Mammary epithelial cell (primary cell): ENCODE measurements at regions of chr1 and their contacts with region 1.

Region 1: GRCh38 chr1:84433258-84434080 is 35.2 kb downstream of the DNASE2B start:
- DNase-seq: peak; percentile 61
- H3K4me3 ChIP-seq: no peak overlapping the region
- H3K27ac ChIP-seq: peak overlapping the region; percentile 33
- H3K4me1 ChIP-seq: peaks cover 16% of the 10 kb centered on the region
- H3K27me3 ChIP-seq: no peaks in the 10 kb centered on the region
- CTCF ChIP-seq: peak; percentile 66 to 73

Region 2: GRCh38 chr1:83905315-83905907 is 528.1 kb before region 1 on chr1:
- CTCF ChIA-PET with region 1: no interaction called
- dilution Hi-C with region 1: no loop called
- in situ Hi-C with region 1: no loop called
- intact Hi-C with region 1: loop called (anchors 2 kb)
- DNase-seq: no peak
- H3K4me3 ChIP-seq: no peak overlapping the region
- H3K27ac ChIP-seq: no peak overlapping the region
- H3K4me1 ChIP-seq: peaks cover 20% of the 10 kb centered on the region
- H3K27me3 ChIP-seq: no peaks in the 10 kb centered on the region
- CTCF ChIP-seq: peak; percentile 42 to 61

Region 3: DNA sequence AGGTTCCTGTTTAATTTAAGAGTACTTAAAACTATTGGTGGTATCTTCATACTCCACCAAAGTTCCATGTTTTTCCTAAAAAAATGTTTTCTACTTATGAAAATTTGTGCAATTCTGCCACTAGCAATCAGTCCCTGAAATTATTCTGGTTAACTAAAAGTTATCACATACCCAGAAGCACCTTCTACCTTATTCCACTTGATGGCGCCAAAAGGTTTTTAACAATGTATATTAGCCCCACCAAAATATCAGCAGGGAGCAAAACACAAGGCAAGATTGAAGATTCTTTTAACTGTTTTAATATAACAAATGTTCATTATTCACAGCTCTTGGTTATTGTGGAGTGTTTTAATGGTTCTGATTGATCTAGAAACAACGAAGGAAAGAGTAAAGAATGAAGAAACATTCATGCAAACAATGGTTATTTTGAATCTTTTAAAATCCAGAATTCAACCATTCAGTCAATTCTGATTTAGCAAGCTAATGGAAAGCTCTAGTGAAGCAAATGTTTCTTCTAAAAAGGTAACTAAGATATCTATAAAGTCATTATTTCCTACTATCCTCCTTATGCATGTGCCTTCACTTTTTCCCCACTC is 501.7 kb before region 1 on chr1:
- CTCF ChIA-PET with region 1: no interaction called
- dilution Hi-C with region 1: no loop called
- in situ Hi-C with region 1: loop called (anchors 10 to 25 kb)
- intact Hi-C with region 1: loop called (anchors 1 kb)
- DNase-seq: peak; percentile 16
- H3K4me3 ChIP-seq: no peak overlapping the region
- H3K27ac ChIP-seq: no peak overlapping the region
- H3K4me1 ChIP-seq: no peaks in the 10 kb centered on the region
- H3K27me3 ChIP-seq: no peaks in the 10 kb centered on the region
- CTCF ChIP-seq: peak; percentile 67 to 75

Region 4: DNA sequence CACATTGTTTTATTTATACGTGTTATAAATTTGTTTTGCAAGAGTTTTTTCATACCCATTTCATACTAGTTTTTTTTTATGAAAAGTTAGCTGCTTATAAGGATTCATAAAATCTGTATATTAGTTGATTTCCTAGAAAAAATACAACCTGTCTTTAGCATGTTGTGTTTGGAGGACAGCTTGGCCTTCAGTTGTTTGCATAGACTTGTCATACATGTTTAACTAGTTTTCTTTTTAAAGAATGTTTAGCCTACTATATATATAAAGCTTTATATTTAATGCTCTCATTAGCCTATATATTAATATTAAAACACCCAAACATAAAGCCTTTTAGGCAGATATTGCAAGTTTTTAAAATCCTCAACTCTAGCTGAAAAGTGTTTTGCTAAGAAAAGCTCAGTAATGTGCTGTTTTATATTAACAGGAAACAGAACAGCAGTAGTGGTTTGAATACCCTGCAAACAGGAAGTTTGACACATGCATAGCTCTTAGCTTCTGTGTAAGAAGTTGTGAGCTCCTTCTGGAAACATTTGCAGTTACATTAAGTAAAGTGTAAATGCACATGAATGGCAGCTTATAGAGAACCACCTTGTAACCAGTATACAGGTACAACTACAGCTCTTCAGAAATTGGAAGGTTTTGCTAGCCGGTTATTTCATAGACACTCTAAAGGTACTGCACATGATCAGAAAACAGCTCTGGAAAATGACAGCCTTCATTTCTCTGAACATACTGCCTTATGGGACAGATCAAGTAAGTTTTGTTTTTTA is 289.5 kb before region 1 on chr1 and contains the start of gene PRKACB:
- CTCF ChIA-PET with region 1: interaction called, 3 read pairs
- dilution Hi-C with region 1: no loop called
- in situ Hi-C with region 1: loop called in 1 of 2 experiments (anchors 10 kb)
- intact Hi-C with region 1: loop called (anchors 1 kb)
- DNase-seq: peak; percentile 27
- H3K4me3 ChIP-seq: no peak within 1 kb of the TSS
- H3K27ac ChIP-seq: no peak within 1 kb of the TSS
- H3K4me1 ChIP-seq: peaks cover 17% of the 10 kb centered on the region
- H3K27me3 ChIP-seq: no peaks in the 10 kb centered on the region
- CTCF ChIP-seq: no peak
- total RNA-seq, gene PRKACB: 25.3 to 29.0 TPM

Region 5: GRCh38 chr1:84156210-84156621 is 277.3 kb before region 1 on chr1:
- CTCF ChIA-PET with region 1: no interaction called
- dilution Hi-C with region 1: loop called (anchors 5 kb)
- in situ Hi-C with region 1: loop called in 1 of 2 experiments (anchors 5 kb)
- intact Hi-C with region 1: no loop called
- DNase-seq: peak; percentile 80
- H3K4me3 ChIP-seq: no peak overlapping the region
- H3K27ac ChIP-seq: no peak overlapping the region
- H3K4me1 ChIP-seq: peaks cover 5% of the 10 kb centered on the region
- H3K27me3 ChIP-seq: no peaks in the 10 kb centered on the region
- CTCF ChIP-seq: no peak

Region 6: GRCh38 chr1:84247425-84248220 is 185.8 kb before region 1 on chr1:
- CTCF ChIA-PET with region 1: no interaction called
- dilution Hi-C with region 1: no loop called
- in situ Hi-C with region 1: no loop called
- intact Hi-C with region 1: loop called (anchors 5 kb)
- DNase-seq: peak; percentile 79
- H3K4me3 ChIP-seq: no peak overlapping the region
- H3K27ac ChIP-seq: no peak overlapping the region
- H3K4me1 ChIP-seq: peaks cover 6% of the 10 kb centered on the region
- H3K27me3 ChIP-seq: no peaks in the 10 kb centered on the region
- CTCF ChIP-seq: no peak

Region 7: DNA sequence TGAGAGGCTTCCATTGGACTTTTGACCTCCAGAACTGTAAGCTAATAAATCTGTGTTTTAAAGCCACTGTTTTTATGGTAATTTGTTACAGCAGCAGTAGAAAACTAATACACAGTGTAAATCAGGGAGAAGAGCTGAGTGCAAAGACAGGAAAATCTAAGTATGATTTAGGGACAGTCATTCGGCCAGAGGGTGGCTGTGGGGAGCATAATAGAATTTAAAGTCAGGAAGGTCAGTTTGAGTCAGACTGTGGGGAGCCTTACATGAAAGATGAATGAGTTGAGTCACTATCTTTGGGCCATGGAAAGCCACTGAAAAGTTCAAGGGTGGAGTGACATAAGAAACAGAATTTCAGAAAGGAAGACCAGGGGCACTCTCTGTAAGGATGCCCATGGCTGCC is 309.2 kb after region 1 on chr1:
- CTCF ChIA-PET with region 1: no interaction called
- dilution Hi-C with region 1: no loop called
- in situ Hi-C with region 1: no loop called
- intact Hi-C with region 1: no loop called
- DNase-seq: peak; percentile 33
- H3K4me3 ChIP-seq: no peak overlapping the region
- H3K27ac ChIP-seq: no peak overlapping the region
- H3K4me1 ChIP-seq: no peaks in the 10 kb centered on the region
- H3K27me3 ChIP-seq: no peaks in the 10 kb centered on the region
- CTCF ChIP-seq: no peak